HCT116 (cell line): ENCODE measurements at regions of chr18 and their contacts with region 1.

Region 1: GRCh38 chr18:3665780-3666525 is 216.0 kb downstream of the TGIF1 start:
- DNase-seq: peak; percentile 95
- ATAC-seq: peak; percentile 80
- H3K4me3 ChIP-seq: peak overlapping the region in 1 of 2 experiments; percentile 28; a peak in 2 of 4 replicates
- H3K27ac ChIP-seq: peak overlapping the region; percentile 85
- H3K4me1 ChIP-seq: peaks cover 63 to 70% of the 10 kb centered on the region in 2 experiments
- H3K27me3 ChIP-seq: no peaks in the 10 kb centered on the region
- CTCF ChIP-seq: peak in 2 of 3 experiments; percentile 89 to 95; a peak in 4 of 6 replicates
- POLR2A ChIP-seq: no peak
- RAD21 ChIP-seq: no peak

Region 2: DNA sequence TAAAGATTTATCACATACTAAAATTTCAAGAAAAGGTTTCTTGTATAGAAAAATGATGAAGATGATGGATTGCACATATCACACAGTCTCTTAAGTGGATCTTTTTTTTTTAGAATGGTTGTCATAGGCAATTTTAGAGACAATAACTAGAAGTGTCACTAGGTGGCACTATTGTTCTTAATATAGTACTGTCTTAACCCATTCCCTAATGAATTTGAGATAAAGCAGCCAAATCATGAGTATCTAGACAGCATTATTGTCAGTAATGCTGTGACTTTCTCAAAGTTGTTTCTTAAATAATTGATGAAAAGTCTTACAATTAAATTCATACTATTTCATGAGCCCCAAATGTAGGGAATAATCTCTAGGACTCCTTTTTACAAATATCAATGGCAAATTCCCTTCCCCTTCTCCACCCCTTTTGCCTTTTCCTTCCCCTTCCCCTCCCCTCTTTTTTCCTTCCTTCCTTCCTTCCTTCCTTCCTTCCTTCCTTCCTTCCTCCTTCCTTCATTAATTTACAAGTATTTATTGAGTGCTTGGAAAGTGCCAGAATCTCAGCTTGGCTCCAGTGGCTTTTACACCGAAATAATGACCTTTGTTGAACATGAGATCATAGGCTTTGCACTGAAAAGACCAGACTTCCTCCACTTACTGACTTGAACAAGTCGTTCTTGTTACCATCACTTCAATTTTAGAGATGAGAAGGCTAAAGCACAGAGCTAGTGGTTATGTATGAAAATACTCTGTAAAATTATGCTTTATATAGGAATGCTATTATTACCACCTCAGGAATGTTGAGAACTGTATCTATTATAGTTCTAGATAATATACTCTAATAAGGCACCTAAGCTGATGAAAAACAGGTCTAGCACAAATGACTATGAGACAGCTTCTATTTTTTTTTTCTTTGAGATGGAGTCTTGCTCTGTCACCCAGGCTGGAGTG is 384.2 kb before region 1 on chr18:
- CTCF ChIA-PET with region 1: interaction called, 65 read pairs
- POLR2A ChIA-PET with region 1: interaction called, 4 read pairs
- RAD21 ChIA-PET with region 1: interaction called, 3 to 8 read pairs
- intact Hi-C with region 1: loop called (anchors 1 kb)
- DNase-seq: peak; percentile 78
- ATAC-seq: peak; percentile 71
- H3K4me3 ChIP-seq: no peak overlapping the region
- H3K27ac ChIP-seq: peak overlapping the region; percentile 11; the same call in 1 of the 2 replicates
- H3K4me1 ChIP-seq: peaks cover 15 to 40% of the 10 kb centered on the region in 2 experiments
- H3K27me3 ChIP-seq: no peaks in the 10 kb centered on the region
- CTCF ChIP-seq: peak; percentile 45 to 75 (median 74)
- POLR2A ChIP-seq: no peak
- RAD21 ChIP-seq: peak; percentile 93

Region 3: DNA sequence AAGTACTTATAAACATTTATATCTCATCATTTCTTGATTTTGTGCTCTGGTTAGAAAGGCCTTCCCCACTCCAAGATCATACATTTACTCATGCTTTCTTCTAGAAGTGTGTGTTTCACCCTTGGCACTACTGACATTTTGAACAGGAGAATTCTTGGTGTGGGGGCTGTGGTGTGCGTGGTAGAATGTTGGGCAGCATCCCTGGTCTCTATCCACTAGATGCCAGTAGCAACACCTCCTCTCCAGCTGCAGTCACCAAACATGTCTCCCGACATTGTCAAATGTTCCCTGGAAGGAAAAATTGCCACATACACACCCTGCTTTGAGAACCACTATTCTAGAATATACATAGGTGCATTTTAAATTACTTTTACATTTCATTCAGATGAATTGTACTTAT is 224.7 kb before region 1 on chr18:
- CTCF ChIA-PET with region 1: interaction called, 10 read pairs
- POLR2A ChIA-PET with region 1: no interaction called
- RAD21 ChIA-PET with region 1: interaction called in 1 of 2 experiments, 3 read pairs
- intact Hi-C with region 1: no loop called
- DNase-seq: no peak
- ATAC-seq: peak; percentile 95
- H3K4me3 ChIP-seq: peak overlapping the region in 1 of 2 experiments; percentile 28; a peak in 1 of 4 replicates
- H3K27ac ChIP-seq: no peak overlapping the region
- H3K4me1 ChIP-seq: peaks cover 21 to 30% of the 10 kb centered on the region in 2 experiments
- H3K27me3 ChIP-seq: no peaks in the 10 kb centered on the region
- CTCF ChIP-seq: peak in 2 of 3 experiments; percentile 63 to 66; a peak in 4 of 6 replicates
- POLR2A ChIP-seq: no peak
- RAD21 ChIP-seq: no peak

Region 4: GRCh38 chr18:3585656-3586509 is 80.1 kb before region 1 on chr18:
- CTCF ChIA-PET with region 1: interaction called, 17 read pairs
- POLR2A ChIA-PET with region 1: interaction called, 10 read pairs
- RAD21 ChIA-PET with region 1: no interaction called
- intact Hi-C with region 1: no loop called
- DNase-seq: peak; percentile 91
- ATAC-seq: peak; percentile 96
- H3K4me3 ChIP-seq: no peak overlapping the region
- H3K27ac ChIP-seq: no peak overlapping the region
- H3K4me1 ChIP-seq: peaks cover 35 to 55% of the 10 kb centered on the region in 2 experiments
- H3K27me3 ChIP-seq: no peaks in the 10 kb centered on the region
- CTCF ChIP-seq: peak in 2 of 3 experiments; percentile 89 to 93; a peak in 4 of 6 replicates
- POLR2A ChIP-seq: no peak
- RAD21 ChIP-seq: no peak

Region 5: DNA sequence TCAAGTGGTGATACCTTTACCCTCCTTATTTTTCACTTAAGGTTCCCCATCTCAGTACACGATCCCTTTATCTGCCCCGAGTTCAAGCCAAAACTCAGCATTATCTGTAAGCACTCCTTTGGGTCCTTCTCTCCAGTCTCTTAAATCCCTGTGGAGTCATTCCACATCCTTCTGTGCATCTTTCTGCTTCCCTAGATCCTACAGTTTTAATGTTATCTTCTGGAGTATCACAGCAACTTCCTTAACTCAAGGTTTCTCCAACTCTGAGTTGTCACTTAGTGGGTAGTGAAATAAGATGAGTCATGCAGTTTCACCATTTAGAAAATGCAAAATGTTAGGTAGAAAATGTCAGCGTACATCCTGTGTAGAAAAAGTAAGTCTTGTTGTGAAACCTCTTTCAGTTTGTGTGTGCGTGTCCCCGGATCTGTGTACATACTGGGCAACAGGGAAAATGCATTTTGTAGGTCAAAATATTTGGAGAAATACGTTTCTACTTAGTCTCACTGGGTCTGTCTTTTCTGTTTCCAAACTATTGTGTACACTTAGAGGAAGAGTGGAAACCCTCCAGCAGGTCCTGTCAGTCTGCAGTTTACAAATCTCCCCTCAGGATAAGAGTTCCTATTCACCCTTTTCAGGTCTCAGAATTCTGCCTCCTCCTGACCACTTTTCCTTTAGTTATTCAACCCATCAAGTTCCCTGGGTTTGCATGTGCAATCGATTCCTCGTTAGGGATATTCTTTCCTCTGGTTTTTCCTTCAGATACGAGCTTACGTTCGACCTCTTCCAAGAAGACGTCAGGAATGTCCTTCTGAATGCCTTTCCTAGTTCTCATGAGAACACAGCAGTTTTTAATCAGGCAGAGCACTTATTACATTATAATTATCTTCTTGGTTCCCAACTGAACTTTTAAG is 61.2 kb before region 1 on chr18:
- CTCF ChIA-PET with region 1: interaction called, 33 read pairs
- POLR2A ChIA-PET with region 1: interaction called, 101 read pairs
- RAD21 ChIA-PET with region 1: interaction called, 3 to 8 read pairs
- intact Hi-C with region 1: no loop called
- DNase-seq: no peak
- ATAC-seq: no peak
- H3K4me3 ChIP-seq: peak overlapping the region; percentile 38 to 46
- H3K27ac ChIP-seq: peak overlapping the region; percentile 100
- H3K4me1 ChIP-seq: peaks cover 81 to 94% of the 10 kb centered on the region in 2 experiments
- H3K27me3 ChIP-seq: no peaks in the 10 kb centered on the region
- CTCF ChIP-seq: no peak
- POLR2A ChIP-seq: peak; percentile 25
- RAD21 ChIP-seq: no peak

Region 6: GRCh38 chr18:3623769-3624545 is 42.0 kb before region 1 on chr18:
- CTCF ChIA-PET with region 1: interaction called, 28 read pairs
- POLR2A ChIA-PET with region 1: interaction called, 91 read pairs
- RAD21 ChIA-PET with region 1: interaction called, 3 to 5 read pairs
- intact Hi-C with region 1: loop called (anchors 1 kb)
- DNase-seq: peak; percentile 96
- ATAC-seq: peak; percentile 77
- H3K4me3 ChIP-seq: peak overlapping the region; percentile 30 to 31
- H3K27ac ChIP-seq: peak overlapping the region; percentile 100
- H3K4me1 ChIP-seq: peaks cover 86 to 96% of the 10 kb centered on the region in 2 experiments
- H3K27me3 ChIP-seq: no peaks in the 10 kb centered on the region
- CTCF ChIP-seq: no peak
- POLR2A ChIP-seq: no peak
- RAD21 ChIP-seq: no peak

Region 7: GRCh38 chr18:3679241-3679640 is 13.3 kb after region 1 on chr18:
- CTCF ChIA-PET with region 1: interaction called, 12 read pairs
- POLR2A ChIA-PET with region 1: interaction called, 5 read pairs
- RAD21 ChIA-PET with region 1: no interaction called
- intact Hi-C with region 1: no loop called
- DNase-seq: no peak
- ATAC-seq: no peak
- H3K4me3 ChIP-seq: no peak overlapping the region
- H3K27ac ChIP-seq: no peak overlapping the region
- H3K4me1 ChIP-seq: peaks cover 7 to 10% of the 10 kb centered on the region in 2 experiments
- H3K27me3 ChIP-seq: no peaks in the 10 kb centered on the region
- CTCF ChIP-seq: no peak
- POLR2A ChIP-seq: no peak
- RAD21 ChIP-seq: no peak